ENCODE measurements at regions of chr9 and their contacts with region 1.

Region 1: GRCh38 chr9:92764988-92765936 is 629 bp upstream of the BICD2 start:
- DNase-seq: peak; percentile 95 to 96
- H3K4me3 ChIP-seq: peak overlapping the region; percentile 84
- H3K4me3 Mint-ChIP-seq: peak overlapping the region; percentile 99
- H3K27ac Mint-ChIP-seq: peak overlapping the region; percentile 90
- H3K4me1 ChIP-seq: peaks cover 9% of the 10 kb centered on the region
- H3K4me1 Mint-ChIP-seq: peaks cover 7% of the 10 kb centered on the region
- H3K27me3 ChIP-seq: no peaks in the 10 kb centered on the region
- H3K27me3 Mint-ChIP-seq: no peaks in the 10 kb centered on the region
- CTCF ChIP-seq: peak; percentile 65 to 82

Region 2: DNA sequence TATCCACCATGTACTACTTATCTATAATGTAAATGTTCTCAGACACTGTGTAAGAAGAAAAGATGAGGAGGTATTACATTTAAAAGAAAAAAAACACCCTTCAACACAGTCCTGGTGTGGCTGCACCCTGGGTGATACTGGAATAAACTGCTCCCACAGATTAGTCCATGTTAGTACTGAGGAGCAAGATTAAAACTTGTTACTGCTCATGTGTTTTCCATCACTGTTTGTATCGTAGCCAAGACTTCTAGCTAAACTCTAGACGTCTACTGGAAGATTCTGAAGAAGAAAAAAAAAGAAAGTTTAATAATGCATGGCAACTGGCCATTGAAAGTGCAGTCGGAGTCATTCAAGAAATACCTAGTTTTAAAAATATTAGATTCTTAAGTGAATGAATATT is 282.9 kb before region 1 on chr9 and contains the start of gene ASPN:
- CTCF ChIA-PET with region 1: no interaction called
- POLR2A ChIA-PET with region 1: no interaction called
- intact Hi-C with region 1: no loop called
- DNase-seq: no peak
- H3K4me3 ChIP-seq: no peak within 1 kb of the TSS
- H3K4me3 Mint-ChIP-seq: no peak within 1 kb of the TSS
- H3K27ac Mint-ChIP-seq: no peak within 1 kb of the TSS
- H3K4me1 ChIP-seq: peaks cover 6% of the 10 kb centered on the region; the same call in 1 of the 2 replicates
- H3K4me1 Mint-ChIP-seq: peaks cover 9% of the 10 kb centered on the region
- H3K27me3 ChIP-seq: no peaks in the 10 kb centered on the region
- H3K27me3 Mint-ChIP-seq: no peaks in the 10 kb centered on the region
- CTCF ChIP-seq: no peak
- total RNA-seq, gene ASPN: not detected in 2 replicates

Region 3: GRCh38 chr9:92790542-92791527 is 25.6 kb after region 1 on chr9:
- CTCF ChIA-PET with region 1: no interaction called
- POLR2A ChIA-PET with region 1: no interaction called
- intact Hi-C with region 1: loop called (anchors 1 kb)
- DNase-seq: peak; percentile 59 to 71
- H3K4me3 ChIP-seq: no peak overlapping the region
- H3K4me3 Mint-ChIP-seq: no peak overlapping the region
- H3K27ac Mint-ChIP-seq: no peak overlapping the region
- H3K4me1 ChIP-seq: no peaks in the 10 kb centered on the region
- H3K4me1 Mint-ChIP-seq: peaks cover 5% of the 10 kb centered on the region
- H3K27me3 ChIP-seq: no peaks in the 10 kb centered on the region
- H3K27me3 Mint-ChIP-seq: peaks cover 3% of the 10 kb centered on the region
- CTCF ChIP-seq: peak; percentile 49 to 62

Region 4: DNA sequence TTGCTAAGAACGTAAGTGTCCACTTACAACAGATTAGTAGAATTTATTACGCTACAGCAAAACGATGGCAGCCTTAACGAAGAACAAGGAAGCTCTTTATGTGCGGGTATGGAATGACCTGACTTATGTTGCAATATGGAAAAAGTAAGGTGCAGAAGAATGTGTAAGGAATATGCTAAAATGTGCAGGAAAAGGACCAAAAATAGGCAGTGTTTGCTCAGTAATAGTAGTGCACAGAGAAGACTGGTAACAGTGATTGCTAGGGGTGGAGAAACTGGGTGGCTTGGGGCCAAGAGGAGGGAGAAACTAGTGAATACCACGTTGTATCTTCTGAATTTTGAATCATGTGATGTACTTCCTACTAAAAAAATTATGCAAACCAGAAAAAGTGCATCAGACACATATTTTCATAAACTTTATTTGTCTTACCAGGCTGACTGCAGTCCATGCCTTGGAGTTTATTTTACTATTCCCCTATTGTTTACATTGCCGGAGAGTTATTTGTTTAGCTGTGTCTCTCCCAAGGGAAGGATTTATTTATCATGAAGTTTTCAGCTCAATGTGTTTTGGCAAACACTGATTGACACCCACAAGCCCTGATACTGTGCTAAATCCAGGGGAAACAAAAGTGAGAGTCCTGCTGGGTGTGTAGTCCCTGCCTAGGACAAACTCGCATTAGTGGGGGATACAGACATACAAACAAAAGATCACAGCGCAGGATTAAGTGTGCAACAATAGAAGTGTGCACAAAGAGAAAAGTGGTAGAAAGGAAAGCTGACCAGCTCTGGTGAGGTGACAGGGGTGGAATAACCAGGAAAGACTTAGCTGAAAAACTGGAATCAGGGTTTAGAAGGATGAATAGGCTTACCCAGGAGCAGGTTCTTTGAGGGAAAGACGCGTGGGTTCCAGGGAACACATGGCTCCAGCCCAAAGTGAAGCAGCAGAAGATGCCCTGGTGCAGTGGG is 146.5 kb after region 1 on chr9:
- CTCF ChIA-PET with region 1: no interaction called
- POLR2A ChIA-PET with region 1: no interaction called
- intact Hi-C with region 1: no loop called
- DNase-seq: no peak
- H3K4me3 ChIP-seq: no peak overlapping the region
- H3K4me3 Mint-ChIP-seq: no peak overlapping the region
- H3K27ac Mint-ChIP-seq: no peak overlapping the region
- H3K4me1 ChIP-seq: no peaks in the 10 kb centered on the region
- H3K4me1 Mint-ChIP-seq: peaks cover 13% of the 10 kb centered on the region
- H3K27me3 ChIP-seq: no peaks in the 10 kb centered on the region
- H3K27me3 Mint-ChIP-seq: no peaks in the 10 kb centered on the region
- CTCF ChIP-seq: no peak

Region 5: GRCh38 chr9:93143830-93144530 is 378.7 kb after region 1 on chr9:
- CTCF ChIA-PET with region 1: no interaction called
- POLR2A ChIA-PET with region 1: no interaction called
- intact Hi-C with region 1: no loop called
- DNase-seq: no peak
- H3K4me3 ChIP-seq: no peak overlapping the region
- H3K4me3 Mint-ChIP-seq: no peak overlapping the region
- H3K27ac Mint-ChIP-seq: no peak overlapping the region
- H3K4me1 ChIP-seq: no peaks in the 10 kb centered on the region
- H3K4me1 Mint-ChIP-seq: no peaks in the 10 kb centered on the region
- H3K27me3 ChIP-seq: no peaks in the 10 kb centered on the region
- H3K27me3 Mint-ChIP-seq: no peaks in the 10 kb centered on the region
- CTCF ChIP-seq: no peak